A673 (cell line): ENCODE measurements at regions of chr1 and their contacts with region 1.

Region 1: DNA sequence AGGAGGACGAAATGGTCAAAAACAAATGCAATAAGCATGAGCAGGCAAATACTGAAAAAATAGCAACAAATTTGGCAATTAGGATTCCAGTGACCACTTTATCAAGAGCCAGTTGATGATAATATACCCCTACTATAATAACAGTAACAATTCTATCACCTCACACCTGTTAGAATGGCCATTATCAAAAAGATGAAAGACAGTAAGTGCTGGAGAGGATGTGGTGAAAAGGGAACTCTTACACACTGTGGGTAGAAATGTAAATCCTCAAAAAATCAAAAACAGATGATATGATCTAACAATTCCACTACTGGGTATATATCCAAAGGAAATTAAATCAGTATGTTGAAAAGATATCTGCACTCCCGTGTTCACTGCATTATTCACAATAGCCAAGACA is 114.3 kb upstream of the GFI1 start:
- DNase-seq: no peak
- H3K4me3 ChIP-seq: no peak overlapping the region
- H3K27ac ChIP-seq: no peak overlapping the region
- H3K4me1 ChIP-seq: no peaks in the 10 kb centered on the region
- H3K27me3 ChIP-seq: no peaks in the 10 kb centered on the region
- CTCF ChIP-seq: no peak

Region 2: DNA sequence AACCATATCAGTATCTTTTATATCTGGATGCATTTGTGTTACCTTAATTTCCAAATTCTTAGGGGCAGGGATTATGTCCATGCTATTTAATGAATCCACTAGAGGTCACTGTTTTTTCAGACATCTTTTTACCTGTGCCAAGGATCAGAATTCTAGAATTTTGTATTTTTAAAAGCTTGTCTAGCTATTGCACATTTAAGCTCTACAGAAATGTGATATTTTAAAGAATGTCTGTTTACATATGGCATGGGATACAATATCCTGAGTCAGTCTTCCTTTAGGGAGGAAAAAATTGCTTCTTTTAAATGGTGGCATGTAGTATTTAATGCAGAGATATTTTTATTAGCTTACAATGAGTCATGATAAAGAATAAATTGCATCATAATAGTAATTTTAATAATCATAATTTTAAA is 290.9 kb before region 1 on chr1:
- CTCF ChIA-PET with region 1: no interaction called
- POLR2A ChIA-PET with region 1: no interaction called
- intact Hi-C with region 1: loop called (anchors 5 kb)
- DNase-seq: peak; percentile 52
- H3K4me3 ChIP-seq: no peak overlapping the region
- H3K27ac ChIP-seq: no peak overlapping the region
- H3K4me1 ChIP-seq: no peaks in the 10 kb centered on the region
- H3K27me3 ChIP-seq: no peaks in the 10 kb centered on the region
- CTCF ChIP-seq: peak; percentile 64